ENCODE measurements at regions of chr15 and their contacts with region 1.

Region 1: DNA sequence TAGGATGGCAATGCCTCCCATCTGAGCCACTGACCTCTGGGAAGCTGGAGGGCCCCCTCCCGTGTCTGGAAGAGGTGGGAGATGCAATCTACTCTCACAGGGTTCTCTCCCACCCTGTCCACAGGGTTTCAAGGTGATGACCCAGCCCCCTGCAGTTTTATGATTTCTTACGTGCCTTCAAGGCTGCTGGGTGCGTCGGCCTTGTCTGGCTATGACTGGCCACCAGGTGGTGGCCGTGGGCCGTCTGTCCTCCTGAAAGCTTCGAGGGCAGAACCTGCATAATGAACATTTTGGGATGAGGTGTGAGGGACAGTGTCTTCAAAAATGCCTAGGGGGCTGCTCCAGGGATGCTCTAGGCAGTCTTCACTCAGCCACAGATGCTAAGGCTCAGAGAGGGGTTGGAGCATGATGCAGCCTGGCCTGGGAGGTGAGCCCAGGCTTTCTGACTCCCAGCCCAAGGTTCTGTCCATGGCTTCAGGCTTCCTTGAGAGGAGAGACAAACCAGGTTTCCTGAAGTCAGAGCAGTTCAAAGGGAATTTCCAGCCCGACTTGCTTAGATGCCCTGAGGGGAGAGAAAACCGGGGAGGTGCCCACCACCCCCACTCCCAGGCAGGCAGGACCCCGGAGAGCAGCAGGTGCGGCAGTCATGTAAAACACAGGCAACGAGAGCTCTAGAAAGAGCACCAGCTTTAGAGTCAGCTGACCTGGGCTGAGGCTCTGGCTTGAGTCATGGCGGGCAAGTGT is 18.7 kb downstream of the ISG20 start:
- DNase-seq: peak; percentile 58
- H3K4me3 ChIP-seq: no peak overlapping the region
- H3K27ac ChIP-seq: no peak overlapping the region
- H3K4me1 ChIP-seq: no peaks in the 10 kb centered on the region
- H3K27me3 ChIP-seq: no peaks in the 10 kb centered on the region
- CTCF ChIP-seq: peak; percentile 76 to 83 (median 80)
- POLR2A ChIP-seq: no peak

Region 2: DNA sequence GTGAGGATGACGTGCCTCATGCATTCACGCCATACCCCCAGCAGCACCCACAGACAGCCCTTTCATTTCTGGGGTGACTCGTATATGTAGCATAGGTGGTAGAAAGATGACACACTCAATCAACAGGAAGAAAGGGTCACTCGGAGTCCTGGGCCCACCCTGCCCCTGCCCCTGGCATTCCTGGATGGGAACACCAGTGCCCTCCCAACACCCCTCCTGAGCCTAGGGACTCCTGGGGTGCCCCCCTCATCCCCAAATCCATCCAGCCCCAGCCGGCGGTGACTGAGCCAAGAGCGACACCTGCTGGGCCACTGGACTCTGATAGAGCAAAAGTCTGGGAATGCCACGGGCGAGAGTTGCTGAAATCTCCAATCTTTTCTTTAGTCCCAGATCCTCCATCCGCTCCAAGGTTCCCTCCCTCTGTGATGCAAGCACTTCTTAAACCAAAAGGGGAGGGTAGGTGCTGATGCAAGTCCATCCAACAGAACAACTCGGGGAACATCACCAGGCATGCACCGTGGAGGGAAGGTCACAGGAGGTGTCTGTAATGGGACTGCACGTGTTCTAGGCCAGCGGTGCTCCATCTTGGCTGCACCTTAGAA is 176.8 kb after region 1 on chr15:
- intact Hi-C with region 1: loop called (anchors 10 kb)
- DNase-seq: peak; percentile 72
- H3K4me3 ChIP-seq: no peak overlapping the region
- H3K27ac ChIP-seq: no peak overlapping the region
- H3K4me1 ChIP-seq: peaks cover 10% of the 10 kb centered on the region
- H3K27me3 ChIP-seq: no peaks in the 10 kb centered on the region
- CTCF ChIP-seq: peak; percentile 43 to 62 (median 46)
- POLR2A ChIP-seq: no peak